Stomach (tissue), 19 donors: ENCODE measurements at regions of chr17 and their contacts with region 1.

Region 1: DNA sequence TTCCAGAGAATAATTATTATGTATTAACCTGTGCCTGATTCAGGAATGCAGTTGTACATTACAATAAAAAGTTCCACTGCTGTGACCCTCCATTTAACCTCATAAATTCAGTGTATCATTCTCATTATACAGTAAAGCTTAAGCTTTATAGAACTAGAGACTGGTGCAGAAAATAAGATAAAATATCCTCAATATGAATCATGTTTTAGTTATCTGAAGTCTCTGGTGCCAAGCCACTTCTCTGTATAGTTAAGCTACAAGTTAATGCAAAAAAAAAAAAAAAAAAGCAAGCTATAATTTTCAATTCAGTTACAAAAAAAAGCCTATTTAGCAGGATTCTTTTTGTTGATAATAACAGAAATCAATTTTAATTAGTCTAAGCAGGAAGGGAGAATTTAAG is 22.4 kb upstream of the SMIM36 start:
- DNase-seq: no peak
- H3K4me3 ChIP-seq: no peak overlapping the region
- H3K27ac ChIP-seq: no peak overlapping the region
- H3K4me1 ChIP-seq: no peaks in the 10 kb centered on the region
- H3K27me3 ChIP-seq: no peaks in the 10 kb centered on the region
- CTCF ChIP-seq: no peak
- EP300 ChIP-seq: no peak
- POLR2A ChIP-seq: no peak

Region 2: DNA sequence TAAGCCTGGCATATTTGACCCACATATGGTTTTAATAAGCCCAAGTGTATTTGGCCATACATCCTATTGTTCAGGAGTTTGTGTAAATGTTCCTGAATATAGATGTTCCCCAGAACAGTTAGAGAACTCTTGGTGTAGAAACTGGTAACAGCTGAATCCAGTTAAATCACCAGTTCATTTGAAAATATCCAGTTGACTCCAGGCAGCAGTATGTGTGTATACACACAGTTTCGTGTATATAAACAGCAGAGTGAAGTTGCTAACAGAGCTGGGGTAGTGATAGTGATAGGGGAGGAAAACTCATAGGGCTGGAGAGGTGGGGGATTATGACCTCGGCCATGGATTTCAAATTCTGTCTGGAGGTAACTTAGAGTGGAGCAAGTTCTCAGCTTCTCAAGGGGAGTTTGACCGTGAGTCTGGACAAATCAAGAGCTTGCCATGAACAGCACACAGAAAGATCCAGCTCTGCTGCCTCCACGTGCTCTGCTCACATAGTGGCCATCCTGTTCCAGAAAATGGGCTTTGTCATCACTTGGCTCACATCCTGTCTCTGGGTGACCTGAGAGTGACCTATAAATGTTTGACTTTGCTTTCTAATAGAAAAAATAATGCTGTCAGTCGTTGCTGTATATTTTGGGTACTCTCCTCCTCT is 81.3 kb before region 1 on chr17:
- intact Hi-C with region 1: no loop called
- DNase-seq: peak in 1 of 2 donors; percentile 68
- H3K4me3 ChIP-seq: no peak overlapping the region
- H3K27ac ChIP-seq: peak overlapping the region; percentile 29 to 76 (median 50)
- H3K4me1 ChIP-seq: peaks cover 0 to 48% (median 16%) of the 10 kb centered on the region in 4 donors
- H3K27me3 ChIP-seq: no peaks in the 10 kb centered on the region
- CTCF ChIP-seq: no peak
- EP300 ChIP-seq: no peak
- POLR2A ChIP-seq: no peak

Region 3: DNA sequence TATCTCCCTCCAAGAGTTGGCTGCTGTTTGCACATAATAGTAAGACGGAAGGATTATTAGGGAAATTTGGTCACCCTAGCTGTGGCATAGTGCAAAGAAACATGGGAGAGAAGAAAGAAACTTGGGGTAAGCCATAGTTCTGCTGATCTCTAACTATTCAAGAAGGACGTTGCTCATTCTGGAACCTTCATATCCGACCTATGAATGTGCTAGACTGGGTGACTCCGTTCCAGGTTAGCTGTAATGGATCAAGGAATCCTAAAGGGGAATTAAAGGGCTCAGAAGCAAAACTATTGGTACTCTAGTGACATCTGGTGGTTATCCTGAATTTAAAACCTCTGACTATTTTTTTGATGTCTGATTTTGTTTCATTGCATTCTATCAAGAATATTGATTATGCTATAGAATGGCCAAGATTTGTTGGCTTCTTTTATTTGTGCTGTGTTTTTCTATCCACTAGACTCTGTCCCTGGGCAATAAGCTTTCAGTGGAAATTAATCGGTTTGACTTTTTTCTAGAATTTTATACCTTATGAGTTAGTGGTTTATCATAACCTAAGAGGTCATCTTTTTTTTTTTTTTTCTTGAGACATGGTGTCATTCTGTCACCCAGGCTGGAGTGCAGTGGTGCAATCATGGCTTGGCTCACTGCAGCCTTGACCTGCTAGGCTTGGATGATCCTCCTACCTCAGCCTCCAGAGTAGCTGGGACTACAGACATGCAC is 236.7 kb after region 1 on chr17:
- intact Hi-C with region 1: loop called (anchors 5 kb)
- DNase-seq: peak in 1 of 2 donors; percentile 70
- H3K4me3 ChIP-seq: no peak overlapping the region
- H3K27ac ChIP-seq: peak overlapping the region in 3 of 5 donors; percentile 59 to 70 (median 62)
- H3K4me1 ChIP-seq: peaks cover 0 to 22% (median 13%) of the 10 kb centered on the region in 4 donors
- H3K27me3 ChIP-seq: no peaks in the 10 kb centered on the region
- CTCF ChIP-seq: peak in 5 of 7 experiments; percentile 35 to 66 (median 50)
- EP300 ChIP-seq: no peak
- POLR2A ChIP-seq: no peak